Ovary (tissue), 10 donors: ENCODE measurements at regions of chr9 and their contacts with region 1.

Region 1: GRCh38 chr9:90451804-90452203 is 190.8 kb downstream of the DIRAS2 start:
- DNase-seq: no peak
- H3K4me3 ChIP-seq: no peak overlapping the region
- H3K27ac ChIP-seq: no peak overlapping the region
- H3K4me1 ChIP-seq: no peaks in the 10 kb centered on the region
- H3K27me3 ChIP-seq: no peaks in the 10 kb centered on the region
- CTCF ChIP-seq: no peak
- EP300 ChIP-seq: no peak
- POLR2A ChIP-seq: no peak

Region 2: DNA sequence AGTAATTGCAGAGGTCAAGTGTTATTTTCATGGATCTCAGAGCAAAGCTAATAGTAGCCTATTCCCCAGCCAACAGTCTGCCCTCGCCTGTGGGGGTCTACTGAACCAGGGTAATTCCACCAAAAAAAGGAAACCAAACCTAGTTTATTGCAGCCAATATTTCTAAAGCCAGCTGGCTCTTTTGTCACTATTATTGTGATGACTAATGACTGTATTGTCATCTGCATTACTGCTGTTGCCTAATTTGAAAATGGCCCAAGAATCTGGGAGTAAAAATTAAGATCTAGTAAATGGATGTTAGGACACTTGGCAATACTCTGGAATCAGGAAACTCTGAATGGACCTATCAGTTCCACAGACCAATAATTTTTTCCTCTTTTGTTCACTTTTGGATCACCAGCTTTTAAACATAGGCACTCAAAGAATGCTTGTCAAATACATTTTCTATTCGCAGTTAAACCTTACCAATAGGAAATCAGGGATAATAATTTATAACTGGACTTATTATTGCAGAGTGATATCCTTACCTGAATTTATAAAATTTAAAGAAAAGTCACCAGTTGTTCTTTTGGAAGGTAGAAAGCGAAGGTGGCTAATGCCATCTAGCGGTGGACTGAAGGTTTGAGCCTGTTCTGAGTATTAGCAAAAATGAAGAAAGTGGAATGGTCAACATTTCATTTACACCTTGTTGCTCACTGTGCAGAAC is 419.0 kb after region 1 on chr9:
- intact Hi-C with region 1: no loop called
- DNase-seq: peak in 1 of 5 donors; percentile 34
- H3K4me3 ChIP-seq: no peak overlapping the region
- H3K27ac ChIP-seq: no peak overlapping the region
- H3K4me1 ChIP-seq: no peaks in the 10 kb centered on the region
- H3K27me3 ChIP-seq: no peaks in the 10 kb centered on the region
- CTCF ChIP-seq: peak; percentile 51 to 68 (median 65)
- EP300 ChIP-seq: no peak
- POLR2A ChIP-seq: no peak

Region 3: DNA sequence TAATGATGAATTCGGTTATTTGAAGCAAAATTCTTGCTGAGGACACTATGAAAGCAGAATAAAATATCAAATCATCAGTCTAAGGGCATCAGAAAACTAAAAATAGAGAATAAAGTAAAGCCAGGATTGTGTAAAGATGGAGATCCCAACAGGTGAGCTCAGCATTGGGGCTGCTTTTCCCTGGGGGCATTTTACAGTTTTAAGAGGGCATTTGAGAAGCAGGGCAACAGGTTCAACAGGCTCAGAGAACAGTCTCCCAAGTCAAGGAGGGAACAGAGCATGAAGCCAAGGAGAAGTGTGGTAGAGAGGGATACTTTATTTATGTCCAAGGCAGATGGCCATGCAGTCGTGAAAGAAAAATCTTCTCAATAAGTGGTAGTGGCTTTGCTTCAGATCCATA is 495.2 kb after region 1 on chr9:
- intact Hi-C with region 1: loop called in 1 of 4 experiments (anchors 5 kb)
- DNase-seq: no peak
- H3K4me3 ChIP-seq: no peak overlapping the region
- H3K27ac ChIP-seq: no peak overlapping the region
- H3K4me1 ChIP-seq: no peaks in the 10 kb centered on the region
- H3K27me3 ChIP-seq: no peaks in the 10 kb centered on the region
- CTCF ChIP-seq: no peak
- EP300 ChIP-seq: no peak
- POLR2A ChIP-seq: no peak